ENCODE measurements at regions of chr3 and their contacts with region 1.

Region 1: DNA sequence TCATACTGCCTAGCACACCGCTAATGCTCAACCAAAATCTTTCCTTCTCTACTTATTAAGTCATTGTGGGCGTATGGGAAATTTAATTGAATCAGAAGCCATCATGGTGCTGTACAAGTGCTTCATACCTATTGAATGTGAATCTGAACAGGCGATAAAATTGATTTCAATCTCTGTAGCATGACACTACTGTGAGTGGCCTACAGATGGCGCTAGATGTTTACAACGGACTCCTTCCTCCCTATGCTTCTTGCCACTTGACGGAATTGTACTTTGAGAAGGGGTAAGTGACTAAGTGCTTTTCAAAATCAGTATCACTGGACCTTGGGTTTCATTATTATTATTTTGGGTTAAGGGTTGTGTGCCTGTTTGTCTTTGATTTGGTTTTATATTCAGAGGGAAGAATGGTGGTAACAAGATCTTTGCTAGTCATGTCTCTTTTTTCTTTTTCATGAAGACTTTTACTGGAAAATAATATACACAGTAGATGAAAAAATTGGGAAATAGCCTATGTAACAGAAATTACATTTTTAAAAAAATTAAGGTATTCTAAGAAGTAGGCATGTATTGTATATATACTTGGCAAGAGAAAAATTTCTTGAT is 35.4 kb downstream of the ACP3 start:
- DNase-seq: peak; percentile 48
- H3K4me3 Mint-ChIP-seq: no peak overlapping the region
- H3K27ac Mint-ChIP-seq: no peak overlapping the region
- H3K4me1 Mint-ChIP-seq: peaks cover 10% of the 10 kb centered on the region
- H3K27me3 Mint-ChIP-seq: peaks cover 7% of the 10 kb centered on the region

Region 2: GRCh38 chr3:132368962-132369361 is 16.3 kb after region 1 on chr3:
- intact Hi-C with region 1: loop called (anchors 2 kb)
- DNase-seq: no peak
- H3K4me3 Mint-ChIP-seq: no peak overlapping the region
- H3K27ac Mint-ChIP-seq: no peak overlapping the region
- H3K4me1 Mint-ChIP-seq: no peaks in the 10 kb centered on the region
- H3K27me3 Mint-ChIP-seq: peaks cover 14% of the 10 kb centered on the region

Region 3: GRCh38 chr3:132399054-132399929 is 46.6 kb after region 1 on chr3:
- intact Hi-C with region 1: loop called (anchors 1 kb)
- DNase-seq: no peak
- H3K4me3 Mint-ChIP-seq: no peak overlapping the region
- H3K27ac Mint-ChIP-seq: no peak overlapping the region
- H3K4me1 Mint-ChIP-seq: no peaks in the 10 kb centered on the region
- H3K27me3 Mint-ChIP-seq: peaks cover 32% of the 10 kb centered on the region

Region 4: GRCh38 chr3:132535575-132536441 is 183.2 kb after region 1 on chr3:
- intact Hi-C with region 1: loop called (anchors 10 kb)
- DNase-seq: peak; percentile 24
- H3K4me3 Mint-ChIP-seq: no peak overlapping the region
- H3K27ac Mint-ChIP-seq: peak overlapping the region; percentile 72
- H3K4me1 Mint-ChIP-seq: peaks cover 22% of the 10 kb centered on the region
- H3K27me3 Mint-ChIP-seq: no peaks in the 10 kb centered on the region

Region 5: GRCh38 chr3:132641837-132642538 is 289.3 kb after region 1 on chr3:
- intact Hi-C with region 1: loop called (anchors 1 kb)
- DNase-seq: no peak
- H3K4me3 Mint-ChIP-seq: no peak overlapping the region
- H3K27ac Mint-ChIP-seq: no peak overlapping the region
- H3K4me1 Mint-ChIP-seq: peaks cover 5% of the 10 kb centered on the region
- H3K27me3 Mint-ChIP-seq: no peaks in the 10 kb centered on the region